ENCODE measurements at regions of chr12 and their contacts with region 1.

Region 1: GRCh38 chr12:89019408-89020120 is 332.7 kb downstream of the DUSP6 start:
- DNase-seq: peak; percentile 43 to 95 (median 78)

Region 2: DNA sequence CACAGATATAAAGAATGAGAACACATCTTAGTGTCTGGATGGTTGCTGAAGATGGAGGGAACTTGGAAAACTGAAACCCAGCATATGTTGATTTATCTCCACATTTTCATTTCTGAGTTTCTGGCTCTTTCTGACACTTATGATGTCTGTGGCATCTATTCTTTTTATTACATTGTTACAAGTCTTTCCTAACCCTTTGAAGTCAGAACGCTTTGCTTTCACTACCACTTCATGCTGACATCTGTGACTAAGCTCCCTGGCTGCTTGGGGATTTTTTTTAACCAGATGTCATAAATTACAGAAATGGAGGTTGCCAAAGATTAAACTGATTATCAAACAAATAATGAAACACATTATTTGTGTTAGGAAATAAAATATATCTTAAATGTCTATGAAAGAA is 628.0 kb before region 1 on chr12:
- intact Hi-C with region 1: no loop called
- DNase-seq: no peak

Region 3: GRCh38 chr12:89529738-89530137 is 510.2 kb after region 1 on chr12:
- intact Hi-C with region 1: loop called (anchors 1 kb)
- DNase-seq: no peak